B cell (primary cell): ENCODE measurements at regions of chr11 and their contacts with region 1.

Region 1: DNA sequence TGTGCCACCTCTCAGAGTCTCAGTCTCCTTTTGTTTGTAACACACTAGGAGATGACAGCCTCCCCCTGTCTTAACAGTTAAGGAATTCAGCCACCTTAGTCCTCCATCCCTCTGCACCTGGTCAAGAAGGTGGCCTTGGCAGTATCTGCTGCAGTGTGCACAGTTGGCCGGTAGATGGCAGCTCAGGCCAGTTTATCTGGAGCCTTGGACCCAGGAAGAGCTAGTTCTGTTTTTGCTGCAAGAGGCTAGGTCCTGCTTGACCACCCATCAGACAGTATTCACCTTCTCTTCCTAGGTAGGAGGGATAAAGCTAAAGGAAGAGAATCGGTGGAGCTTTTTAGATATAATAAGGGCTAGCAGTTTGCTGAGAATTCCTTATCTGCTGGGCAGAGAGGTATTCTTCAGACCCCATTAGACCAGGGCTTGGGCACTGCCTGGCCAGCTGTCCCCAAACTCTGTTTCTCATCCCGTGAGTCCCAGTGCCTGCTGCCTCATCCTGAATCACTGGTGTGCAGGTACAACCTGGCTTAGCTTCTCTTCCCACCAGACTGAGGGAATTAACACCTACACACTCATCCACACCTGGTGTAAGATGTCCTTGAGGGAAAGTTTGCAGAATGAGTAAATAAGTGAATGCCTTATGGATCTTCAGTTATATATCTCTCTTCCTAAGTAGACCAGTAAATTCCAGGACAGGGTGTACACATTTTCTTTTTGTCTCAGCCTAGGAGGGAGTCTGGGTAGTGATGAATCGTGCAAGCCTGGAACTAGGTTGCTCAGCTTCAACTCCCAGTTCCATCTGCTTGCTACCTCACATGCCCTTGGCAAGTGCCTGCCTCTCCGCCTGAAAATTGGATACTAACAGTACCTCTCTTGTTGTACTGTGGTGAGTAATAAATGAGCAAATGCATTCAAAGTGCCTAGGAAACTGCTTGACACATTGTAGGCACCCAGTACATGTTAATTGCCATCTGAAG is 70.8 kb upstream of the NARS2 start:
- DNase-seq: peak; percentile 66
- ATAC-seq: peak; percentile 74
- H3K4me3 ChIP-seq: no peak overlapping the region
- H3K4me3 Mint-ChIP-seq: no peak overlapping the region
- H3K27ac ChIP-seq: no peak overlapping the region
- H3K27ac Mint-ChIP-seq: no peak overlapping the region
- H3K4me1 ChIP-seq: no peaks in the 10 kb centered on the region
- H3K4me1 Mint-ChIP-seq: no peaks in the 10 kb centered on the region
- H3K27me3 ChIP-seq: no peaks in the 10 kb centered on the region
- H3K27me3 Mint-ChIP-seq: peaks cover 23% of the 10 kb centered on the region
- CTCF ChIP-seq: peak; percentile 97

Region 2: DNA sequence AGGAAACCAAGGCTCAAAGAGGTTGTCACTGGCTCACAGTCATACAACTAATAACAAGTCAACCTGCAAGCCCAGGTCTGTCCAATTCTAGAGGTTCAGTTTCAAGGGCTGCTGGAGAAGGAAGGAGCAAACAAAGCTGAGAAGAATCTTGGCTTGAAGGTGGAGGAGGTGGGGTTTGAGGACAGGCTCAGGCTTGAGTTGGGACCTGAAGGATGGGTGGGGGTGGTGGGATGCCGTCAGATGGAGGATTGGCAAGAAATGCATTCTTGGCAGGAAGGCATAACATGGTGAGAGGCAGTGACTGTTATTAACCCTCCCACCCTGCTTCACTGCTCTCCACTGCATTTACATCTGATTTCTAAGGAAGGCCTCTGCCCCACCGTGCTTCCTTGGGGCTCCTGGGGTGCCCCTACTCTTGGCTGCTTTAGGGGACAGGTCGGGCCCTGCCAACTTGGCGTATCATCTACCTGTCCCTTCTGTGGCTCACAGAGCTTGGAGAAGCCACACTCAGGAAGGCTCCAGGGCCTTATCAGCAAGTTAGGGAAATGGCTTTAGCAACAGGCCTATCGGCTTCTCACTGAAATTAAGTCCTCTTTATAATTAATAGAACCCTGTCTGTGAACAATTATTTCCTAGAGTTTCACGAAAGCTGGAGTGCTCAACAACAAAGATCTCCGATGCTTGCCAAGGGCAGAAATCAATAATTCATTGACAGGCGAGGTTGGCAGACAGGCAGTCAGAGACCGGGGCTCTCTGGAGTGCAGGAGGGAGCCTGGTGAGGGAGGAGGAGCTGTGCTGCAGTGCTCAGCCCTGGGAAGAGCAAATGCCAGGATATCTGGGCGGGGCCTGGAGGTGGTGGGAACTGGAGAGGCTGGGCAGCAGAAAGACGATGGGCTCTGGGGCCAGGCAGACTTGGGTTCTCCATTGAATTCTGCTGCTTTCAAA is 14.1 kb after region 1 on chr11:
- CTCF ChIA-PET with region 1: interaction called, 46 read pairs
- POLR2A ChIA-PET with region 1: no interaction called
- intact Hi-C with region 1: no loop called
- DNase-seq: no peak
- ATAC-seq: no peak
- H3K4me3 ChIP-seq: no peak overlapping the region
- H3K4me3 Mint-ChIP-seq: no peak overlapping the region
- H3K27ac ChIP-seq: no peak overlapping the region
- H3K27ac Mint-ChIP-seq: no peak overlapping the region
- H3K4me1 ChIP-seq: no peaks in the 10 kb centered on the region
- H3K4me1 Mint-ChIP-seq: no peaks in the 10 kb centered on the region
- H3K27me3 ChIP-seq: no peaks in the 10 kb centered on the region
- H3K27me3 Mint-ChIP-seq: no peaks in the 10 kb centered on the region
- CTCF ChIP-seq: no peak

Region 3: GRCh38 chr11:78715639-78716311 is 70.3 kb after region 1 on chr11:
- CTCF ChIA-PET with region 1: interaction called, 6 read pairs
- POLR2A ChIA-PET with region 1: no interaction called
- intact Hi-C with region 1: loop called (anchors 1 kb)
- DNase-seq: peak; percentile 13
- ATAC-seq: no peak
- H3K4me3 ChIP-seq: no peak overlapping the region
- H3K4me3 Mint-ChIP-seq: no peak overlapping the region
- H3K27ac ChIP-seq: no peak overlapping the region
- H3K27ac Mint-ChIP-seq: no peak overlapping the region
- H3K4me1 ChIP-seq: no peaks in the 10 kb centered on the region
- H3K4me1 Mint-ChIP-seq: no peaks in the 10 kb centered on the region
- H3K27me3 ChIP-seq: peaks cover 0 to 4% (median under 1%) of the 10 kb centered on the region in 4 experiments
- H3K27me3 Mint-ChIP-seq: peaks cover 8% of the 10 kb centered on the region
- CTCF ChIP-seq: peak; percentile 33

Region 4: DNA sequence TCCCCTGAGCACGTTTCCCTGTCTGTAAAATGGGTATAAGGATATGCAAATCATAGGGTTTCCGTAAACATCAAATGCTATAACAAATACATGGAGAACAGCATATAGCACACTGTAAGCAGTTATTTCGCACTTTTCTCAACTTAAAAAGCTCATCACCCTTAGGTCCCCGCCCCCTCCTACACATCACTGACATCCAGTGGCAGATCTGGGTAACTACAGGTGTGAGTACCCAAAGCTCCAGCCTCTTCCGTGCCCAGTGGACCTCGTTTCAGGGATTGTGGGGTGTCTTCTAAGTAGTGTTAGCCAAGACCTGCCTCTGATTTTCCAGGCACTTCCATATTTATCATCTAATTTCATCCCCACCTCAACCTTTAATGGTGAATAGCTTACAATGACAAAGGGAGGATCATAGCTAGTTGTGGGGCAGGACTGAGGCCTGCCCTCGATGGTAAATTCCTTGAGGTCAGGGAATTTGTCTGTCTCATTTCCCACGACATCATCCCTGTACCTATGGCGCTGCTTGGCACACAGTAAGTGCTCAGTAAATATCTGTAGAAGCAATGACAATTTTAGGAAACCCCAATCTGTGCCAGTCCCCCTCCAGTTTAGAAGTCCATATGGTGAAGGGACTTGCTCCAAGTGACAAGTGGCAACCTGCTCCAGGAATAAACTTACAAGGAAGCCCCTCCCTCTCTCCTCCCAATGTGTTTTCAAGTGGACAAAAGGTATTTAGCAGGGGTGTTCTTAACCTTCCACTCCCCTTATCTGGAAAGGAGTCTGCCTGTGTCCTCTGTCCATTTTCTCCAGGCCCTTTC is 454.8 kb after region 1 on chr11:
- CTCF ChIA-PET with region 1: interaction called, 14 read pairs
- POLR2A ChIA-PET with region 1: no interaction called
- intact Hi-C with region 1: no loop called
- DNase-seq: peak; percentile 29
- ATAC-seq: peak; percentile 39
- H3K4me3 ChIP-seq: no peak overlapping the region
- H3K4me3 Mint-ChIP-seq: no peak overlapping the region
- H3K27ac ChIP-seq: no peak overlapping the region
- H3K27ac Mint-ChIP-seq: no peak overlapping the region
- H3K4me1 ChIP-seq: no peaks in the 10 kb centered on the region
- H3K4me1 Mint-ChIP-seq: no peaks in the 10 kb centered on the region
- H3K27me3 ChIP-seq: peaks cover 0 to 6% (median 2%) of the 10 kb centered on the region in 4 experiments
- H3K27me3 Mint-ChIP-seq: peaks cover 10% of the 10 kb centered on the region
- CTCF ChIP-seq: peak; percentile 42

Region 5: GRCh38 chr11:80155412-80156017 is 1510.0 kb after region 1 on chr11:
- CTCF ChIA-PET with region 1: no interaction called
- POLR2A ChIA-PET with region 1: no interaction called
- intact Hi-C with region 1: loop called (anchors 10 kb)
- DNase-seq: peak; percentile 1
- ATAC-seq: no peak
- H3K4me3 ChIP-seq: no peak overlapping the region
- H3K4me3 Mint-ChIP-seq: no peak overlapping the region
- H3K27ac ChIP-seq: no peak overlapping the region
- H3K27ac Mint-ChIP-seq: no peak overlapping the region
- H3K4me1 ChIP-seq: no peaks in the 10 kb centered on the region
- H3K4me1 Mint-ChIP-seq: no peaks in the 10 kb centered on the region
- H3K27me3 ChIP-seq: no peaks in the 10 kb centered on the region
- H3K27me3 Mint-ChIP-seq: no peaks in the 10 kb centered on the region
- CTCF ChIP-seq: no peak